A673 (cell line): ENCODE measurements at regions of chr1 and their contacts with region 1.

Region 1: DNA sequence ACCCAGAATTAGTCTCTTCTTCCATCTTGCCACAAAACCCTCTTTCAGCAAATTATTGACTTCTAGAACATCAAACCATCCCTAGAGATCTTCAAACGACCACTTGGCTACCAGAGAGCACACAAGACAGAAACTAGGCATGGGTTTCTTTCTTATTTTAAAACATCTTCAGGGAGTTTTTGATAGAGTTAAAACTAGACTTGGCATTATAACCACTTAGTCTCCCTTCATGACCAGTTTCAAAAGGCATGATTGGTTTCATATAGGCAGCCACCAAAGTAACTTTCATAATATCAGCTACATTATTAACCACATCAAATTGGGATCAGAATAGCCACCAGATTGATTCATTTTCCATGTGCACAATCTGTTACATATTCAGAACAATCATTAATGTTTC is 368.4 kb upstream of the GREM2 start:
- DNase-seq: no peak
- H3K4me3 ChIP-seq: no peak overlapping the region
- H3K27ac ChIP-seq: no peak overlapping the region
- H3K4me1 ChIP-seq: no peaks in the 10 kb centered on the region
- H3K27me3 ChIP-seq: no peaks in the 10 kb centered on the region
- CTCF ChIP-seq: no peak

Region 2: DNA sequence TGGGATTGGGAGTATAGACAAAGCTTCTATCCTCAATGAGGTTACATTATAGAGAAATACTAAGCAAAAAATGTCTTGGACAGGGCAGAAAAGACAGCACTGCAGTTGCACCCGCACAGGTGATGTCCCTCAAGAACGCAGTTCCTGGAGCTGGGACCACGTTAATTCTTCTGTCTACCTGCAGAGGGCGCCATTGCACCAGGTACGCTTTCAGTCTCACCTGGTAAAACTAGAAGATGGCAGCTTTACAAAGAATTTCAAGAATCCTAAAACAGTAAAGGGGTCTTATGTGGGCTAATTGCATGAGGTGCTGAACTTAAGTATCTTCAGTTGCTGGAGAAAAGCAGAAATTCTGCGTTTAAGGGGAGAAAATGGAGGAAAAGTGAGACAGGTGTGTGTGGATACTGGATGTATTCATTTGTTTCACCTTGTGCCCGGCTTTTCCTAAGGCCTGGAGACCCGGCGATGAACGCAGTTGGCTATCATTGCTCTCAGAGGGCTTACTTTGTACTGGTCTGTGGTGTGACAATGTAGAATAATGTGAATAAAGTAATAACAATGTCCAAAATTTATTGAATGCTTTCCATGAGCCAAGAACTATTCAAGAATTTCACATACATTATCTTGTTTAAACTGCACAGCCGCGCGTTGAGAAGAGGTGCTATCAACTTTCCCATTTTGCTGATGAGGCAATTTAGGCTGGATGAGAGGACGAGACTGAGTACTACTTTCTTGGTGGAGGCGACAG is 92.1 kb before region 1 on chr1:
- CTCF ChIA-PET with region 1: no interaction called
- POLR2A ChIA-PET with region 1: no interaction called
- intact Hi-C with region 1: no loop called
- DNase-seq: peak; percentile 1
- H3K4me3 ChIP-seq: no peak overlapping the region
- H3K27ac ChIP-seq: no peak overlapping the region
- H3K4me1 ChIP-seq: no peaks in the 10 kb centered on the region
- H3K27me3 ChIP-seq: no peaks in the 10 kb centered on the region
- CTCF ChIP-seq: peak; percentile 71

Region 3: DNA sequence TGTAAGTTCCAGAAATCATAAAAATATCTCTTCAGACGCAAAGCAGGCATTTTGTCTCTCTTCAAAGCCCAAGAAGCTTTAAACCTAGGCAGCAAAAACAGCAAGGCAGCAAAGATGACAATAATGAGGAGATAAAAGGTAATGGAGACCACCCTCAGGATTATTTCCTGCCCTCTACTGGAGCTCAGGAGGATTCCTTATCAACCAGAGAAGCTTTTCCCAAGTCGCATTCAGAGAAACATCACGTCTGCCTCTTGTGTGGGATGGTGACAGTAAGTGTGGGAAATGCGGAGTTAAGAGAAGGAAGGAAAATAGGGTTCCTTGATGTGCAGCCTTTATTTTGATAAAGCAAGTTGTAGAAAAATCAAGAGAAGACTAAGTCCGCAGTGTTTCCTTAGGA is 10.9 kb after region 1 on chr1:
- CTCF ChIA-PET with region 1: no interaction called
- POLR2A ChIA-PET with region 1: no interaction called
- intact Hi-C with region 1: no loop called
- DNase-seq: no peak
- H3K4me3 ChIP-seq: no peak overlapping the region
- H3K27ac ChIP-seq: no peak overlapping the region
- H3K4me1 ChIP-seq: no peaks in the 10 kb centered on the region
- H3K27me3 ChIP-seq: peaks cover 5% of the 10 kb centered on the region
- CTCF ChIP-seq: no peak

Region 4: DNA sequence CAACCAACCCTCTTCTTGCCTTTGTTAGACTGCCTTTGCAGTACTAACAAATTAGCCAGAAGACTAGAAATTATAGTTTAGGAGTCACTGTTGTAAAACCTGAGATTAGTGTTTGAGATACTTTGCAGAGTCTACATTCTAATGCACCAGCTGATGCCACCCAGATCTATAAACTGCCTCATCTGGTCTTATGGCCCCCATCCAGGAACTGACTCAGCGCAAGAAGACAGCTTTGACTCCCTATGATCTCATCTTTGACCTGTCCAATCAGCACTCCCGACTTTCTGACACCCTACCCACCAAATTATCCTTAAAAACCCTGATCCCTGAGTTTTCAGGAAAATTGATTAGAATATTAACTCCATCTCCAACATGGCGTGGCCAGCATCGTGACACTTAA is 42.0 kb after region 1 on chr1:
- CTCF ChIA-PET with region 1: no interaction called
- POLR2A ChIA-PET with region 1: no interaction called
- intact Hi-C with region 1: no loop called
- DNase-seq: no peak
- H3K4me3 ChIP-seq: no peak overlapping the region
- H3K27ac ChIP-seq: no peak overlapping the region
- H3K4me1 ChIP-seq: no peaks in the 10 kb centered on the region
- H3K27me3 ChIP-seq: no peaks in the 10 kb centered on the region
- CTCF ChIP-seq: no peak

Region 5: DNA sequence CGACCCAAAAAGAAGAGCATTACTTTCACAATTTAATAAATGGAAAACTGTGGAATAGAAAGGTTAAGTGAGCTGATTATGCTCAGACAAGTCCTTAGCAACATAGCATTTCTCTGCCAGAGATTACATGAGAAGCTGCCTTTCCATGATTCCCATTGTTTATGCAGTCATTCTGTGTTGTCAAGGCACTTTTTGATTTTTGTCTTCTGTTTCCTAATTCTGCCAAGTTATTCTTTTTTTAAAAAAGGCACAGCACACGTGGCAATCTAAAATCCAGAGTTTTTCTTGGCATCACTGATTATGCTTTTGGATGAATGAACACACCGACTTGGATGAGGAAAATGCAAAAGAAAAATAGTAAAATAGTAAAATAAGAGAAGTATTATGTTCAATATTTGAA is 191.6 kb after region 1 on chr1:
- CTCF ChIA-PET with region 1: no interaction called
- POLR2A ChIA-PET with region 1: interaction called, 30 read pairs
- intact Hi-C with region 1: no loop called
- DNase-seq: no peak
- H3K4me3 ChIP-seq: no peak overlapping the region
- H3K27ac ChIP-seq: no peak overlapping the region
- H3K4me1 ChIP-seq: no peaks in the 10 kb centered on the region
- H3K27me3 ChIP-seq: no peaks in the 10 kb centered on the region
- CTCF ChIP-seq: no peak